CD8-positive, alpha-beta memory T cell (primary cell): ENCODE measurements at regions of chr11 and their contacts with region 1.

Region 1: DNA sequence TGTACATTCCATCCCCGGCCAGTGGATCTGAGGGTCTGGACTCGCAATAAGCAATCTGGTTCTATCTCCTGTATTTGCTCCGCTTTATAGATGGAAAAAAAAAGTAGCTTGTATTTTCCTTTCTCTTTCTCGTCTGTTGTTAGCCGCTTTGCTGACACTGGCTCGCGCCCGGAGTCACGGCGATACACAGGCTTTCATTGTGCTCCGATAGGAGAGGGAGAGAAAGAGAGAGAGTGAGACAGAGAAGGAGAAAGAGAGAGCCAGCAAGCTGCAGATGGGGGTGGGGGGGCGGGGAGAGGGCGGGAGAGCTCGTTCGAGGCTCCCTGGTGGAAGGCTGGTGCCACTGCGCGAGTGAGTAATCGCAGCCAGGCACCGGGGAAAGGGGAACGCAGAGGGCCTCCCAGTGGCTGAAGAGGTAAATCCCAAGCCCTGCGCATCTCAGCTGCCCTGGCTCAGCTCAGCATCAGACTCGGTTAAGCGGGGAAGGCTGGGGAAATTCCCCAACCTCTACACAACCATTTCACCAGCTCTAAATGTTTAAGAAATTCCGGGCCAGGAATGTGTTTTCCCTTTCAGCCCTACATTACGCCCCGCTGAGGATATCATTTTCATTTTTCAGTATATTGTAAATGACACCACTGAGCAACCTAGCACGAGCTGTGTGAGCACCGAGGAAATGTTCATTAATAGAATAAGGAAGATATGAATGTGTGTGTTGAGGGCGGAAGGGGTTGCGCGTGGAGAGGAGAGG is at the start of gene MAML2:
- DNase-seq: peak; percentile 82 to 94 (median 85)
- H3K4me3 ChIP-seq: peak within 1 kb of the TSS; percentile 99
- H3K4me3 Mint-ChIP-seq: peak within 1 kb of the TSS; percentile 90 to 99 (median 96)
- H3K27ac ChIP-seq: peak within 1 kb of the TSS; percentile 46
- H3K27ac Mint-ChIP-seq: peak within 1 kb of the TSS; percentile 87 to 94 (median 92)
- H3K4me1 ChIP-seq: peaks cover 37% of the 10 kb centered on the region
- H3K4me1 Mint-ChIP-seq: peaks cover 40 to 44% (median 40%) of the 10 kb centered on the region in 3 donors
- H3K27me3 ChIP-seq: no peaks in the 10 kb centered on the region
- H3K27me3 Mint-ChIP-seq: no peaks in the 10 kb centered on the region
- total RNA-seq, gene MAML2: 15.6 to 15.9 TPM

Region 2: DNA sequence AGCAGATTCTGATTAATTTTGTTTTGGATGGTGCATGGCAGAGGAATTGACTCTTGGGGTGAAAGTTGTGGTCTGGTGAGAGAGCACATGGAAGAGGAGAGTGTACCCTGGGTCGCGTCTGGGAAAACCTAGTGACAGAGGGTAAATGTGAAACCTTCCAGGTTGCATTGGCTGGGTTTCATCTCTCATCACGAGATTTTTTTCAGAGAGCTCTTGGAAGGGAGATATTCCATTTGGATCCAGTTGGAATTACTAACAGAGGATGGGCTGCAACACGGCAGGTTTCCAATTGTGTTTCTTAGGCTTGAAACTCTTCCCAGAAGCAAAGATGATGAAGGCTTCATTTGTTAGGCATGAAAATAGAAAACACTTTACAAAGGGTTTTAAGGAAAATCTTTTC is 309.5 kb before region 1 on chr11:
- CTCF ChIA-PET with region 1: interaction called, 11 read pairs
- POLR2A ChIA-PET with region 1: interaction called, 3 read pairs
- DNase-seq: no peak
- H3K4me3 ChIP-seq: no peak overlapping the region
- H3K4me3 Mint-ChIP-seq: no peak overlapping the region
- H3K27ac ChIP-seq: no peak overlapping the region
- H3K27ac Mint-ChIP-seq: no peak overlapping the region
- H3K4me1 ChIP-seq: peaks cover 8% of the 10 kb centered on the region
- H3K4me1 Mint-ChIP-seq: peaks cover 19 to 47% (median 41%) of the 10 kb centered on the region in 3 donors
- H3K27me3 ChIP-seq: no peaks in the 10 kb centered on the region
- H3K27me3 Mint-ChIP-seq: no peaks in the 10 kb centered on the region

Region 3: GRCh38 chr11:96082002-96082899 is 260.9 kb before region 1 on chr11:
- CTCF ChIA-PET with region 1: interaction called, 14 read pairs
- POLR2A ChIA-PET with region 1: no interaction called
- DNase-seq: no peak
- H3K4me3 ChIP-seq: no peak overlapping the region
- H3K4me3 Mint-ChIP-seq: no peak overlapping the region
- H3K27ac ChIP-seq: no peak overlapping the region
- H3K27ac Mint-ChIP-seq: no peak overlapping the region
- H3K4me1 ChIP-seq: no peaks in the 10 kb centered on the region
- H3K4me1 Mint-ChIP-seq: peaks cover 21 to 53% (median 30%) of the 10 kb centered on the region in 3 donors
- H3K27me3 ChIP-seq: no peaks in the 10 kb centered on the region
- H3K27me3 Mint-ChIP-seq: no peaks in the 10 kb centered on the region

Region 4: GRCh38 chr11:96134602-96135001 is 208.5 kb before region 1 on chr11:
- CTCF ChIA-PET with region 1: interaction called, 16 read pairs
- POLR2A ChIA-PET with region 1: no interaction called
- DNase-seq: peak in 2 of 5 donors; percentile 16 to 23
- H3K4me3 ChIP-seq: no peak overlapping the region
- H3K4me3 Mint-ChIP-seq: peak overlapping the region in 1 of 7 donors; percentile 17
- H3K27ac ChIP-seq: no peak overlapping the region
- H3K27ac Mint-ChIP-seq: peak overlapping the region in 6 of 8 donors; percentile 14 to 86 (median 74)
- H3K4me1 ChIP-seq: peaks cover 29% of the 10 kb centered on the region
- H3K4me1 Mint-ChIP-seq: peaks cover 52 to 76% (median 66%) of the 10 kb centered on the region in 3 donors
- H3K27me3 ChIP-seq: no peaks in the 10 kb centered on the region
- H3K27me3 Mint-ChIP-seq: no peaks in the 10 kb centered on the region

Region 5: DNA sequence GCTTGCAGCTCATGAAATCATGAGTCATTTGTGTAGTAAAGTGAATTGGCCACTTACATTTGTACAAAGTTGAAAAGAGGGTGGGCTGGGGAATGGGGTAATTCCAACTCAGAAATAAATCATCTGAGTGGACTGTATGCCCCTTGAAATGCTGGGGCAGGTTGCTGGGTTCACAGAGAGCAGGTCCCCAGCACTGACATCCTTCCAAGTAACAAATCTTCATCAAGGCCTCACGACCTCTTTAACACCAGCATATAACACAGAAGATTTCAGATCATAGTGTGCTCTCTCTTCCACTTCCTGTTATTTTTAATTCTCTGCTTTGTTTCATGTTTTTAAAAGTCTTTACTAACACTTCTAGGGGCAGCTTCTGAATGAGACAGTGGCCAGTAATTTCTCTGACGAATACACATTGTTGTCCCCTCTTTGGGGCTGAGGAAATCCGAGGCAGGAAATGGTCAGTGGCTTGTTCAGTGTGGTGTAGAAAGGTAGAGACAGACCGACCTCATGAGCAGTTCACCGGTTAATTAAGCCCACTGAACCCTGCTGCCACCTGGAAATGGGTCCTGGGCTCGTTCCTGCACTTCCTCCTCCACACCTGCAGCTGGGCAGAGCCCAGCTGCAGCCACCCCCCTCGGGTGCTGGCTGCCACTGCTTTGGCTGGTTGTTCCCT is 127.9 kb before region 1 on chr11:
- CTCF ChIA-PET with region 1: interaction called, 35 read pairs
- POLR2A ChIA-PET with region 1: interaction called, 3 read pairs
- DNase-seq: peak in 3 of 5 donors; percentile 43 to 66 (median 50)
- H3K4me3 ChIP-seq: peak overlapping the region; percentile 12
- H3K4me3 Mint-ChIP-seq: peak overlapping the region; percentile 1 to 84 (median 63)
- H3K27ac ChIP-seq: peak overlapping the region; percentile 70
- H3K27ac Mint-ChIP-seq: peak overlapping the region; percentile 88 to 99 (median 95)
- H3K4me1 ChIP-seq: peaks cover 97% of the 10 kb centered on the region
- H3K4me1 Mint-ChIP-seq: peaks cover 73 to 90% (median 88%) of the 10 kb centered on the region in 3 donors
- H3K27me3 ChIP-seq: no peaks in the 10 kb centered on the region
- H3K27me3 Mint-ChIP-seq: no peaks in the 10 kb centered on the region

Region 6: DNA sequence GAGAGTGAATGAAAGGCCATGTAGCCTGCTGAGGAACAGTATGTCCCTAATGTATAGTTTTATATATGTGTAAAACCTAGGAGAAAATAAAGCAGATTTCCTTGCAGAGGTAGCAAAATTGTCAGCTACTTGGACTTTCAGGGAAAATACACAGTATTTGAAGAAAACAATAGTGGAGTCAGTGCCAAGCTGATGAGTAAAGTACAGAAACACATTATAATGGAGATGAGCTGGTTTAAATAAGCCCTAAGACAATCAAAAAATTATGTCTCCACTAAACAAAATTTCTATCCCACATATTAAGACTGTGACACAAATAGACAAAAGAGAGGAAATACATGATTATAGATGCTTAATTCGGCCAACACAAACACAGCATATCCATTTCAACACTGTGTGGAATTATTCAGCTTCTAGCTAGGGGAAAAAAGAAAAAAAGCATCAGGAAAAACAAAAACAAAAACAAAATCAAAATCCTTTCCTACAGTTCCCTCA is 76.1 kb before region 1 on chr11:
- CTCF ChIA-PET with region 1: interaction called, 15 read pairs
- POLR2A ChIA-PET with region 1: interaction called, 4 read pairs
- DNase-seq: no peak
- H3K4me3 ChIP-seq: peak overlapping the region; percentile 53
- H3K4me3 Mint-ChIP-seq: peak overlapping the region; percentile 72 to 87 (median 85)
- H3K27ac ChIP-seq: peak overlapping the region; percentile 21
- H3K27ac Mint-ChIP-seq: peak overlapping the region; percentile 84 to 96 (median 94)
- H3K4me1 ChIP-seq: peaks cover 57% of the 10 kb centered on the region
- H3K4me1 Mint-ChIP-seq: peaks cover 72 to 88% (median 83%) of the 10 kb centered on the region in 3 donors
- H3K27me3 ChIP-seq: no peaks in the 10 kb centered on the region
- H3K27me3 Mint-ChIP-seq: no peaks in the 10 kb centered on the region

Region 7: DNA sequence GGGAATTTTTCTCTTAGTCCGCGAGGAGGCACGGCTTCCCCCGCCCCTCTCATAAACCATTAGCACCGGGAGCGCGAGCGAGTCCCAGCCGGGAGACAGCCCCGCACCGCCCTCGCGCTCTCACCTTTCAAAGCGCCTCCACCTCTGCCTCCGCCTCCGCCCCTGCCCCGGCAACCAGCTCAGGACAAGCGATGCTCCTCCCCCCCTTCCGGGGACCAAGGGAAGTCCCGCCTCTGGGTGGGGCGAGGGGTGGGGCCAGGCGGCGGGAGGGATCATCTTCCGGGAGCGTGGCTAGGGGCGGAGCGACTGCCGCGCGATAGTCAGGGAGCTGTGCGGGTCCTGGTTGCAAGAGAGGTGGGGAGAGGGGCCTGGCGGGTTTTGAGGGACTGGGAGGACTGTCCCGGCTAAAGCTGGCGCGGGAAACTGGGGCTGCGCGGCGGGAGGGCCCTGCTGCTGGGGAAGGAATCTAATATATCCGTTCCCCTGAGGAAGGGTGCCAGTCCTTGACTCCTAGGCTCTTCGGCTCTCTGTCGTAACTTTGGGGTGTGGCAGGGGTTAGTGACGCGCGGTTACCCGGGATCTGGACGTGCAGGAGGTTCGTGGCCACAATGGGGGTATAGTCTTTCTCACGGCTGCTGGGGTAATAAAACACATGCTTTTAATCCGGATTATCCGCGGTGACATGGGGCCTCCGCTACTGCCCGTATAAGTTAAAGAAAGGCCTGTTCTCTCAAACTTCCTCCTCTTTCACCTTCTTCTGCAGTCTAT is 46.8 kb after region 1 on chr11 and contains the starts of genes CCDC82 and JRKL:
- CTCF ChIA-PET with region 1: interaction called, 24 read pairs
- POLR2A ChIA-PET with region 1: interaction called, 10 read pairs
- DNase-seq: peak; percentile 96 to 99 (median 97)
- H3K4me3 ChIP-seq: peak within 1 kb of the TSS; percentile 90
- H3K4me3 Mint-ChIP-seq: peak within 1 kb of the TSS; percentile 90 to 98 (median 95)
- H3K27ac ChIP-seq: peak within 1 kb of the TSS; percentile 85
- H3K27ac Mint-ChIP-seq: peak within 1 kb of the TSS; percentile 77 to 99 (median 94)
- H3K4me1 ChIP-seq: peaks cover 21% of the 10 kb centered on the region
- H3K4me1 Mint-ChIP-seq: peaks cover 35 to 68% (median 63%) of the 10 kb centered on the region in 3 donors
- H3K27me3 ChIP-seq: no peaks in the 10 kb centered on the region
- H3K27me3 Mint-ChIP-seq: no peaks in the 10 kb centered on the region
- total RNA-seq, gene CCDC82: 23.4 to 25.3 TPM
- total RNA-seq, gene JRKL: 9.7 to 10.4 TPM

Region 8: GRCh38 chr11:96763244-96763643 is 420.1 kb after region 1 on chr11:
- CTCF ChIA-PET with region 1: no interaction called
- POLR2A ChIA-PET with region 1: no interaction called
- DNase-seq: no peak
- H3K4me3 ChIP-seq: no peak overlapping the region
- H3K4me3 Mint-ChIP-seq: no peak overlapping the region
- H3K27ac ChIP-seq: no peak overlapping the region
- H3K27ac Mint-ChIP-seq: no peak overlapping the region
- H3K4me1 ChIP-seq: no peaks in the 10 kb centered on the region
- H3K4me1 Mint-ChIP-seq: no peaks in the 10 kb centered on the region
- H3K27me3 ChIP-seq: no peaks in the 10 kb centered on the region
- H3K27me3 Mint-ChIP-seq: no peaks in the 10 kb centered on the region